Thyroid gland (tissue), 4 donors: ENCODE measurements at regions of chr18 and their contacts with region 1.

Region 1: DNA sequence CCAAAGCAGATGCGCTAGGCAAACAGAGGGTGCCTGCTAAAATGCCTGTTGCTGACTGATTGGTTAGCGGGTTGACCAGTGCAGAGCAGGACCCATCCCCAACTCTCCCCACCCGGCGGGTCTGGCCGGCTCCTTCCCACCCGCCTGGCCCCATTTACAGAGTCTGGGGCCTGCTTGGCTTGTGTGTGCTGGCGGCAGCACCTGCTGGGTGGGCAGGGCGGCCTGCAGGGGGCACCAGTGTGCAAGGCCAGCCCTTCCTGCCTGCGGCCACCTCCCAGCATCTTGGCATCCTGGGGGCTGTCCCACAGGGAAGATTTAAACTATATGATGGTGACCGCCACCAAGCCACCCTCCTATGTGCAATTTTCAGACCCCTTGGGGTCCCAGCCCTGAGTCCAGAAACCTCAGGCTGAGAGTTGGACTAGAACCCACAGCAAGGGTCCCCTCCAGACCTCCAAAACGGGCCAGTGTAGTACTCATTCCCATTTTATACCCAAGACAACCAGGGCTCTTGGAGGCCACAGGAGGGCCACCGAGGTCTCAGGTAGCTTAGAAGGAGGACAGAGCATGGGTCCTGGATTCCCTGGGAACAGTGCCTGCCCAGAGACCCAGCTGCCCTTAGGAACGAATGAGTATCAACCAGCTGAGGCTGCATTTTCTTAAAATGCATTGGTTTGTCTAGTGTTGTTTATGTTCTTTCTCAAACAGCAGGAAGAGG is 173.6 kb downstream of the SMAD7 start:
- DNase-seq: peak; percentile 66 to 67
- H3K4me3 ChIP-seq: no peak overlapping the region
- H3K27ac ChIP-seq: peak overlapping the region in 2 of 3 donors; percentile 0 to 3
- H3K4me1 ChIP-seq: peaks cover 24 to 52% of the 10 kb centered on the region in 2 donors
- H3K27me3 ChIP-seq: no peaks in the 10 kb centered on the region
- CTCF ChIP-seq: peak; percentile 67 to 91 (median 79)
- POLR2A ChIP-seq: no peak

Region 2: DNA sequence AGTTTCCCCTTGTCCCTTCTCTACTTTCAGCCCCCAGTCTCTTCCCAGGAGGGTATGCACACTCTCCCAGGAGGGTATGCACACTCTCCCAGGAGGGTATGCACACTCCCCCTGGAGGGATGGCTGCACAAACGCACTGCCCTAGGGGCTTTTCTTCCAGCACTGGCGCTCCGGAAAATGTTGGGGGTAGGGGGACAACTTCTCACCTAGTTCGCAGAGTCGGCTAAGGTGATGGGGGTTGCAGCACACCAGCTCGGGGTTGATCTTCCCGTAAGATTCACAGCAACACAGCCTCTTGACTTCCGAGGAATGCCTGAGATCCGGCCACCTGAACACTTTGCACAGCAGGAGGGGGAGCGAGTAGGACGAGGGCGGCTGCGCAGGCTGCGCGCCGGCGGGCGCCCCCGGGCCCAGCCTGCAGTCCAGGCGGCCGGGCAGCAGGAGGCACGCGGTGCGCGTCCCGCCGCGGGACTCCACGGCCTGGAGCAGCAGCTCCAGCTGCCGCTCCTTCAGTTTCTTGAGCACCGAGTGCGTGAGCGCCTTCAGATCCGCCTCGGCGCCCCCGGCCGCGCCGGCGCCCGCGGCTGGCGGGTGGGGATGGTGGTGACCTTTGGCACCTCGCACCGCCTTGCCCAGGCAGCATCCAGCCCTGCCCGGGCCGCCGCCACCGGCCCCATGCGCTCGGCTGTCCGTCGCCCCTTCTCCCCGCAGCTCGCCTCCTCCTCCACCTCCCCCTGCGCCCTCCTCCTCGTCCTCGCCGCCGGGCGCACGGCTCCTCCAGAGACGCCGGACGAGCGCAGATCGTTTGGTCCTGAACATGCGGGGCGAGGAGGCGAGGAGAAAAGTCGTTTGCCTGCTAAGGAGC is 172.7 kb after region 1 on chr18:
- intact Hi-C with region 1: loop called (anchors 5 kb)
- DNase-seq: peak; percentile 83 to 86
- H3K4me3 ChIP-seq: peak overlapping the region; percentile 73 to 94 (median 91)
- H3K27ac ChIP-seq: peak overlapping the region; percentile 93 to 98 (median 95)
- H3K4me1 ChIP-seq: peaks cover 31 to 39% of the 10 kb centered on the region in 2 donors
- H3K27me3 ChIP-seq: no peaks in the 10 kb centered on the region
- CTCF ChIP-seq: peak in 4 of 6 experiments; percentile 16 to 35 (median 28)
- POLR2A ChIP-seq: peak in 1 of 2 donors; percentile 77

Region 3: GRCh38 chr18:49178736-49179135 is 401.6 kb after region 1 on chr18:
- intact Hi-C with region 1: loop called (anchors 10 kb)
- DNase-seq: peak; percentile 12 to 20
- H3K4me3 ChIP-seq: no peak overlapping the region
- H3K27ac ChIP-seq: no peak overlapping the region
- H3K4me1 ChIP-seq: no peaks in the 10 kb centered on the region
- H3K27me3 ChIP-seq: no peaks in the 10 kb centered on the region
- CTCF ChIP-seq: peak; percentile 9 to 59 (median 36)
- POLR2A ChIP-seq: no peak